PC-9 (cell line): ENCODE measurements at regions of chr4 and their contacts with region 1.

Region 1: DNA sequence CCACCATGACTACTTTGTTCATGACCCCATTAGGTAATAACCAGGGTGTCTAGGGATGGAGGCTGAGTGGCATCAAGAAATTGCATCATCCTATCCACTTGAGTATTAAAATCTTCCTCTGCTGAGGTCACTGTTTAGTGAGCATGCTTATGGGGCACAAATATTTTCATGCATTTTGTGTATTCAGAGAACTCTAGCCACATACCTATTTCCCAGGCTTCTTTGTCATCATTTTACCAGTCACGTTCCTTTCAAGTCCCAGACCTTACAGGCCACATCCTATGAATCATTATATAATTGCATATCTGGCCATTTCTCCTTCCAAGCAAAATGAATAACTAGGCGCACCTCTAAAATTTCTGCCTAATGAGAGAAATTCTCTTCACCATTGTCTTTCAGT is 1882.9 kb upstream of the AGA start:
- DNase-seq: no peak
- H3K4me3 ChIP-seq: no peak overlapping the region
- H3K27ac ChIP-seq: no peak overlapping the region
- H3K4me1 ChIP-seq: no peaks in the 10 kb centered on the region
- H3K27me3 ChIP-seq: no peaks in the 10 kb centered on the region
- CTCF ChIP-seq: no peak

Region 2: GRCh38 chr4:178789279-178789678 is 535.9 kb before region 1 on chr4:
- CTCF ChIA-PET with region 1: interaction called, 22 read pairs
- POLR2A ChIA-PET with region 1: no interaction called
- intact Hi-C with region 1: no loop called
- DNase-seq: no peak
- H3K4me3 ChIP-seq: no peak overlapping the region
- H3K27ac ChIP-seq: no peak overlapping the region
- H3K4me1 ChIP-seq: no peaks in the 10 kb centered on the region
- H3K27me3 ChIP-seq: no peaks in the 10 kb centered on the region
- CTCF ChIP-seq: no peak

Region 3: DNA sequence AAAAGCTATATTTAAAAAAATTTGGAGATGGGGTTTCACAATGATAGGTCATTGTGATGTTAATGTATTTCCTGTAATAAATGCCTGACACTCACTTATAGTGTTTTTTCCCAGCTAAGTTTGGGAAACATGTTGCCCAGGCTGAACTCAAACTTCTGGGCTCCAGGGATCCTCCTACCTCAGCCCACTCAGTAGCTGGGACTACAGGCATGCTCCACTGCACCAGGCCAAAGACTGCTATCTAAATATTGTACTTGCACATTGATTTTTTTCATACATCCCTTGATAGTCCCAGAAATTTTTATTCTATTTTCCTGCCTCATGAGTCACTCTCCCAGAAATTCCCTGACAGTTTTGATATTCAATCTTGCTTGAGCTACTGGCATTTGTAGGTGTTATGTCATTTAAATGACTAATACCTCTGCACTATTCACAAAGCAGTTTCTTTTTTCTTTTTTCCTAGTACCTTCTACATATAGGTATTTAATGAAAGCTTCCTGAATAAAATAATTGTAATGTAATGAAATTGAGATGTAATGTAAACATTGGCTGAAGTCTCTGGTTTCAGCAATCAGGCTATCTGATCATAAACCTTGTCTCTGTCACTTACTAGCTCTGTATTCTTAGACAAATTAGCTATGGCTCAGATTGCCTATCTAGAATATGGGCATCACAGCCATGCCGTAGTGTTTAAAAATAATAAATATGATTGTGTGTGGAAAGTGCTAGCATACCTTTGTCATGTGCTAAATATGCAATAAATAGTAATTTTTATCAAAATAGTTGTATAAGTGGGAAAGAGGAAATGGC is 90.1 kb after region 1 on chr4:
- CTCF ChIA-PET with region 1: no interaction called
- POLR2A ChIA-PET with region 1: no interaction called
- intact Hi-C with region 1: no loop called
- DNase-seq: no peak
- H3K4me3 ChIP-seq: no peak overlapping the region
- H3K27ac ChIP-seq: no peak overlapping the region
- H3K4me1 ChIP-seq: no peaks in the 10 kb centered on the region
- H3K27me3 ChIP-seq: no peaks in the 10 kb centered on the region
- CTCF ChIP-seq: no peak